Common myeloid progenitor, CD34-positive (primary cell): ENCODE measurements at regions of chr15 and their contacts with region 1.

Region 1: DNA sequence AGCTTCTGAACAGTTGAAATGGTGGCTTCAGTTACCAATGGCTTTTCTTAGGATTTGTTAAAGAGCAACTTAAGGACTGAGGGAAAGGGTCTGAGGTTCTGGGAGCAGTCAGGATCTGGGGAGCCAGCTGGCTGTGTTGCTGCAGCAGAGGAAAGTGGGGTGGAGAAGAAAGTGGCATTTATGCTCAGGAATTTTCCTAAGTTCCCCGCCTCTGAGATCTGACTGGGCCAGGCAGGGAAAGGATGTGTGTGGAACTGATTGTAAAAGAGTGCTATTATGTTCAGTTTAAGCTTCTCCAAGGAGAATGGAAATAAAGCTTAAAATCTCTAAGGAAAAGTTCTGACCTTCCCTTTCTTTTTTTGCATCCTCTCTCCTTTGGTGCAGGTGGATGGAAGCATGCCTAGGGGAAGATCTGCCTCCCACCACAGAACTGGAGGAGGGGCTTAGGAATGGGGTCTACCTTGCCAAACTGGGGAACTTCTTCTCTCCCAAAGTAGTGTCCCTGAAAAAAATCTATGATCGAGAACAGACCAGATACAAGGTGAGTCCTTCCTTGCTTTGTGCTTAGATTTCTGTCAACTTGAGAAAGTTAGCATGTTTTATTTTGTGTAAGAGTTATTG is 37.8 kb downstream of the IQGAP1 start:
- DNase-seq: no peak
- H3K4me3 ChIP-seq: no peak overlapping the region
- H3K27ac ChIP-seq: no peak overlapping the region
- H3K4me1 ChIP-seq: no peaks in the 10 kb centered on the region
- H3K27me3 ChIP-seq: peaks cover 0 to 14% (median 10%) of the 10 kb centered on the region in 5 experiments

Region 2: DNA sequence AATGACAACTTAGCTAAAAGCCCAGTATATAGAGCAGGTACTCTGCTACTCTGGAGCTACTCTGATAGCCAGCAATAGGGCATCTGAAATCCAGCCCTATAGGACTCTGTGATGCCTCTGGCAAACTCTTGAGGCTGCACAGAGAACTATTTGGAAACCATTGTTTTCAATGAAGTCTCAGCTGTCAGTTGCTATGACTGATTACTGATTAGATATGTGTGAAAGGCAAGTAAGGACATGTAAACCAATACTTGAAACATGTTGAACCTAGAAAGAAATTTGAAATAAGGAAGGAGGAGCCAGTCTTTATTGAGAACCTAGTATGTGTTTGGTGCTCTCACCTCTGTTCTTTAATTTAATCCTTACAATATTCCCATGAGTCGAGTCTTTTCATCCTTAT is 63.7 kb after region 1 on chr15:
- CTCF ChIA-PET with region 1: no interaction called
- POLR2A ChIA-PET with region 1: interaction called, 11 read pairs
- DNase-seq: no peak
- H3K4me3 ChIP-seq: no peak overlapping the region
- H3K27ac ChIP-seq: no peak overlapping the region
- H3K4me1 ChIP-seq: no peaks in the 10 kb centered on the region
- H3K27me3 ChIP-seq: no peaks in the 10 kb centered on the region

Region 3: GRCh38 chr15:90501898-90502297 is 76.1 kb after region 1 on chr15:
- CTCF ChIA-PET with region 1: no interaction called
- POLR2A ChIA-PET with region 1: no interaction called
- DNase-seq: no peak
- H3K4me3 ChIP-seq: no peak overlapping the region
- H3K27ac ChIP-seq: no peak overlapping the region
- H3K4me1 ChIP-seq: peaks cover 0 to 11% (median 5%) of the 10 kb centered on the region in 4 experiments
- H3K27me3 ChIP-seq: no peaks in the 10 kb centered on the region